Activated CD8-positive, alpha-beta T cell treated with anti-CD3 and anti-CD28 coated beads, Interleukin-2, amount 10 ng/mL, durations not matched to agents 7 days and 5 days (primary cell): ENCODE measurements at regions of chr19 and their contacts with region 1.

Region 1: GRCh38 chr19:15418588-15419412 is at the start of gene AKAP8L:
- DNase-seq: peak; percentile 100
- ATAC-seq: peak; percentile 98
- H3K4me3 Mint-ChIP-seq: peak within 1 kb of the TSS; percentile 99
- H3K27ac Mint-ChIP-seq: peak within 1 kb of the TSS; percentile 99
- H3K4me1 Mint-ChIP-seq: peaks cover 41% of the 10 kb centered on the region
- H3K27me3 Mint-ChIP-seq: no peaks in the 10 kb centered on the region
- total RNA-seq, gene AKAP8L: 83.8 to 86.7 TPM

Region 2: GRCh38 chr19:15177269-15178116 is 241.3 kb before region 1 on chr19:
- CTCF ChIA-PET with region 1: interaction called, 14 read pairs
- POLR2A ChIA-PET with region 1: no interaction called
- DNase-seq: peak; percentile 88
- ATAC-seq: peak; percentile 95
- H3K4me3 Mint-ChIP-seq: no peak overlapping the region
- H3K27ac Mint-ChIP-seq: no peak overlapping the region
- H3K4me1 Mint-ChIP-seq: peaks cover 3% of the 10 kb centered on the region
- H3K27me3 Mint-ChIP-seq: peaks cover 9% of the 10 kb centered on the region

Region 3: GRCh38 chr19:15323496-15324227 is 95.1 kb before region 1 on chr19:
- CTCF ChIA-PET with region 1: no interaction called
- POLR2A ChIA-PET with region 1: no interaction called
- DNase-seq: no peak
- ATAC-seq: no peak
- H3K4me3 Mint-ChIP-seq: no peak overlapping the region
- H3K27ac Mint-ChIP-seq: no peak overlapping the region
- H3K4me1 Mint-ChIP-seq: peaks cover 78% of the 10 kb centered on the region
- H3K27me3 Mint-ChIP-seq: no peaks in the 10 kb centered on the region

Region 4: DNA sequence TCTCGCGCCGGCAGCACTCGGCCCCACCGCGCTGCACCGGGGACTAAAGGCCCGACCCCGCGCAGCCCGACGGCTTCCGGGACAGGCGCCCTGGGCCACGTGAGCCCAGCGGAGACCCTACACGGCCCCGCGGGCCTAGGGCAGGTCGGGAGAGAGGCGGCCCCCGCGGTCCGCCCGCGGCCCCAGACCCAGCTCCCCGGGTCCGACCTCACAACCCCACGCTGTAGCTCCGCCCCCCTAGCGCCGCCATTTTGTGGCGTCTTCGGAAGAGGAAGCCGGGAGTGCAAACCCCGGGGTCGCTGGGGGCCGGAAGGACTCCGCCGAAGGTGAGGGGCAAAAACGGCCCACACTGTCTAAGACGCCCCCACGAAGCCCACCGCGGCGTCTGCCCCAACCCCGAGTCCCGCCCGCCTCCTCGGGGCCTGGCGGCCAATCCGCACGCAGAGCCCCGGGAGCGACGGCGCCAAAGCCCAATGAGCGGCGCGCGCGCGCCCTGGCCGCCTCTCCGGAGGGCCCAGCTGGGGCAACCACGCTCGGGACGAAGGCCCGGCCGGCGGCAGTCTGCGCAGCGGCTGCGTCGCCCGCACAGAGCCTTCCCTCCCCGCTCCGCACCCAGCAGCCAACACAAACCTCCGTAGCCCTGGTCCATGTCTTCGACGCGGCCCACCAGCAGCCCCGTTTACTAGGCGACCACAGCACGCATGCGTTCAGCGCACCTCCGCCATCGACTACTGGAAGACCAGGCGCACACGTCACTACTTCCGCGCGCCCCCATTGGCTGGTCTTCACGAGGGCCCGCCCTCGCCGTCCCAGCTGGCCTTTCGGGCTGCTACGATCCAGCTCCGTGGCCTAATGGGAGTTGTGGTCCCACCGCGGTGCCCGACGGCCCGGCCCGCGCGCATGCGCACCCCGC is 39.5 kb before region 1 on chr19 and contains the start of gene AKAP8:
- CTCF ChIA-PET with region 1: interaction called, 53 read pairs
- POLR2A ChIA-PET with region 1: interaction called, 44 read pairs
- DNase-seq: peak; percentile 98
- ATAC-seq: peak; percentile 88
- H3K4me3 Mint-ChIP-seq: peak within 1 kb of the TSS; percentile 96
- H3K27ac Mint-ChIP-seq: peak within 1 kb of the TSS; percentile 99
- H3K4me1 Mint-ChIP-seq: peaks cover 36% of the 10 kb centered on the region
- H3K27me3 Mint-ChIP-seq: no peaks in the 10 kb centered on the region
- total RNA-seq, gene AKAP8: 47.4 to 48.0 TPM

Region 5: GRCh38 chr19:15432629-15433518 is 14.1 kb after region 1 on chr19:
- CTCF ChIA-PET with region 1: interaction called, 42 read pairs
- POLR2A ChIA-PET with region 1: interaction called, 18 read pairs
- DNase-seq: peak; percentile 95
- ATAC-seq: peak; percentile 89
- H3K4me3 Mint-ChIP-seq: peak overlapping the region; percentile 98
- H3K27ac Mint-ChIP-seq: peak overlapping the region; percentile 98
- H3K4me1 Mint-ChIP-seq: peaks cover 34% of the 10 kb centered on the region
- H3K27me3 Mint-ChIP-seq: no peaks in the 10 kb centered on the region

Region 6: GRCh38 chr19:15466851-15467733 is 48.3 kb after region 1 on chr19:
- CTCF ChIA-PET with region 1: interaction called, 39 read pairs
- POLR2A ChIA-PET with region 1: interaction called, 39 read pairs
- DNase-seq: peak; percentile 79
- ATAC-seq: peak; percentile 45
- H3K4me3 Mint-ChIP-seq: peak overlapping the region; percentile 48
- H3K27ac Mint-ChIP-seq: peak overlapping the region; percentile 85
- H3K4me1 Mint-ChIP-seq: peaks cover 62% of the 10 kb centered on the region
- H3K27me3 Mint-ChIP-seq: peaks cover 10% of the 10 kb centered on the region

Region 7: DNA sequence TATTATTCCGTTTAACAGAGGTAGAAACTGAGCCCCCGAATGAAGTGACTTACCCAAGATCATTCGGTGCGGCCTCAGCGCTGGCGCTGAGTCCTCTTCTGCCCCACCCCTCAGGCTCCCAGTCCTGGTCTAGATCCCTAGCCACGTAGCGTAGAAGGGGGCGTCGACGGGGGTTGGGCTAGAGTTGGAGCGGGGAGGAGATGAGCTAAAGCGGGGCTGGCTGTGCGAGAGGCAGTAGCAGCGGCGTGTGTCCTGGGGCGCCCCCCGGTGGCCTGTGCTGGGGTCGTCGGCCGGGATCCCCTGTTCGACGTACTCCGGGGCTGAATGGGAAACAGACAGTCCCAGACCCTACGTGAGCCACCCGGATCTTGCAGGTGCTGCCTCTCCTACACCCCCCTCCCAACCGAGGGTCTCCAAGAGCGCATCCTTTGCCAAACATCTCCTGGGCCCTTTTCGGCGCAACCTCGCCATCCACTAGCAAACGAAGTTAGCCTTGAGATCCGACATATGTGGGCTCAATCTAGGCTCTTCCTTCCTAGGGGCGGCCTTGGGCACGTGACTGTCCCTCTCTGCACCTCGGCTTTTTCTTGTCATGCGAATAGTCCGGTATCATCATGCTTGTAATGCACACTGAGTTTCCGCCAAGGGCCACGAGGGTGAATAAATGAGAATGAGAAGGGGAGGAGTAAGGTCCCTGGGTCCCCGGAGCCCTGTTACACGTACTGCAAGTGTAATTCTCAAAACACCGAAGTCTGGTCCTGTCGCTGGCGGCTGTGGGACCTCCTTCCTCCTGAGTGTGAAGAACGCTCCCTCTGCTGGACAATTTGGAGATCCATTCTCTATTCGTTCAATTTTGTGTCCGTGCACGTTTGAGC is 137.2 kb after region 1 on chr19:
- CTCF ChIA-PET with region 1: interaction called, 259 read pairs
- POLR2A ChIA-PET with region 1: interaction called, 18 read pairs
- DNase-seq: peak; percentile 98
- ATAC-seq: peak; percentile 86
- H3K4me3 Mint-ChIP-seq: peak overlapping the region; percentile 86
- H3K27ac Mint-ChIP-seq: peak overlapping the region; percentile 82
- H3K4me1 Mint-ChIP-seq: peaks cover 29% of the 10 kb centered on the region
- H3K27me3 Mint-ChIP-seq: peaks cover 9% of the 10 kb centered on the region